Sciatic nerve (tissue), 2 donors: ENCODE measurements at regions of chr12 and their contacts with region 1.

Region 1: GRCh38 chr12:24668563-24668962 is 280.3 kb downstream of the BCAT1 start:
- DNase-seq: no peak
- ATAC-seq: no peak

Region 2: GRCh38 chr12:24364921-24365320 is 303.6 kb before region 1 on chr12:
- intact Hi-C with region 1: loop called (anchors 5 kb)
- DNase-seq: no peak
- ATAC-seq: no peak